ENCODE measurements at regions of chr9 and their contacts with region 1.

Region 1: DNA sequence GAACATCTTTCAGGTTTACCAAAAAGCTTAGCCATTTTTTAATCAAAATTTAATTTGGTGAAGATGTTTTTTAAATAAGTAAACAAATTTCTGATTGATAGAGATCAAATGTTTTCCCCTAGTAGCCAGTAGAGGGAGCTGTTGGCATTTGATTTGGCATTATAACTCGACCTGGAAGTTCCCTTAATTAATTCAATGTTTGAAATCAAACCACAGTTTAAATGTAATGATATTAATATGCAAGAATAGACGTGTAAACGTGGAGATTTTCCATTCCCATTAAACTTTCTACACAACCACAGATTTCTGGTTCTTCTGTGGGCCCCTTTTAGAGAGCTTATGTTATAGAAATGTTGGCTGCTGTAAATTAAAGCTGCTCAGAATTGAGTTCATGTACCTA is 148.1 kb upstream of the MPDZ start:
- DNase-seq: no peak
- H3K4me3 ChIP-seq: no peak overlapping the region
- H3K27ac ChIP-seq: no peak overlapping the region
- H3K4me1 ChIP-seq: no peaks in the 10 kb centered on the region
- H3K27me3 ChIP-seq: no peaks in the 10 kb centered on the region
- CTCF ChIP-seq: peak; percentile 71 to 80

Region 2: GRCh38 chr9:13295556-13295955 is 132.0 kb before region 1 on chr9:
- intact Hi-C with region 1: no loop called
- DNase-seq: no peak
- H3K4me3 ChIP-seq: no peak overlapping the region
- H3K27ac ChIP-seq: no peak overlapping the region
- H3K4me1 ChIP-seq: no peaks in the 10 kb centered on the region
- H3K27me3 ChIP-seq: no peaks in the 10 kb centered on the region
- CTCF ChIP-seq: no peak

Region 3: GRCh38 chr9:14353222-14354056 is 925.9 kb after region 1 on chr9:
- intact Hi-C with region 1: loop called (anchors 5 kb)
- DNase-seq: peak; percentile 96
- H3K4me3 ChIP-seq: peak overlapping the region; percentile 14 to 37
- H3K27ac ChIP-seq: peak overlapping the region; percentile 92 to 94
- H3K4me1 ChIP-seq: peaks cover 0 to 77% (median 50%) of the 10 kb centered on the region in 4 donors
- H3K27me3 ChIP-seq: no peaks in the 10 kb centered on the region
- CTCF ChIP-seq: peak; percentile 88 to 92

Region 4: GRCh38 chr9:14400658-14400995 is 973.0 kb after region 1 on chr9:
- intact Hi-C with region 1: loop called (anchors 10 kb)
- DNase-seq: peak; percentile 46 to 69
- H3K4me3 ChIP-seq: peak overlapping the region; percentile 3 to 14
- H3K27ac ChIP-seq: peak overlapping the region in 1 of 2 donors; percentile 10
- H3K4me1 ChIP-seq: peaks cover 0 to 21% (median 3%) of the 10 kb centered on the region in 4 donors
- H3K27me3 ChIP-seq: no peaks in the 10 kb centered on the region
- CTCF ChIP-seq: peak; percentile 61

Measured in tibial artery (tissue), 4 donors.